ENCODE measurements at regions of chr5 and their contacts with region 1.

Region 1: GRCh38 chr5:94469889-94470288 is 148.5 kb downstream of the KIAA0825 start:
- DNase-seq: peak; percentile 55
- H3K4me3 ChIP-seq: peak overlapping the region in 1 of 2 experiments; percentile 33; a peak in 2 of 4 replicates
- H3K27ac ChIP-seq: peak overlapping the region; percentile 25 to 97; a peak in 3 of 4 replicates
- H3K4me1 ChIP-seq: peaks cover 0 to 37% of the 10 kb centered on the region in 2 experiments; a peak in 2 of 4 replicates
- H3K27me3 ChIP-seq: no peaks in the 10 kb centered on the region
- CTCF ChIP-seq: no peak
- EP300 ChIP-seq: peak; percentile 97 to 100
- RAD21 ChIP-seq: peak; percentile 55

Region 2: DNA sequence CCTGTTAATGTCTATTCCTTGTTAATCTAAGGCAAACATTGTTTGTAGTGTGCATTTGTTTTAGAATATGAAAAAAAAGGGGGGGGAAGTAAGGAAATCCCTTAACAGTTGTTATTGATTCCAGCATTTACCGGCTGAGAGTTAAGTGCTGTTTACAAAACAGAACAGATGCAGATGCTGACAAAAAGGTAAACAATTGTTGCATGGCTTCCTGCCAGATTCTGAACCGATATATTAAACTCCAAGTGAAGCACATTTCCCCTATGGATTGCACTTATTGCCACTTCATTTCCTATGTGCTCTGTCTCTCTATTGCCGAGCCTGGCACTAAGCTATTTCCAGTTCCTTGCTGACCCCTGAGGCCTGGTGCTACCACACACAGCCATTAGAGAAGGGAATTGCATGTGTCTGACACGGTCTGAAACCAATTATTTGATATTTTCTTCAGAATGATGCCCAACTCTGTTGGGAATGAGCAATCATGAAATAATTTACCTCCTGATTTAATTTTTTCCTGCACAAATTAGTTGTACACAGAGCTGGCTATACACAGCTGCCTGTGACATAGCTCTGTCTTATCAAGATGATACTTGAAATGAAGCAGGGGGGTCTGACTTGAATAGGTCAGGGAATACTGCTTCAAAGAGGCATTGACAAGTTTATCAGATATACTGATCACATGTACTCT is 38.7 kb after region 1 on chr5:
- CTCF ChIA-PET with region 1: interaction called, 12 read pairs
- POLR2A ChIA-PET with region 1: interaction called, 6 read pairs
- DNase-seq: peak; percentile 77
- H3K4me3 ChIP-seq: no peak overlapping the region
- H3K27ac ChIP-seq: peak overlapping the region in 1 of 2 experiments; percentile 96; a peak in 2 of 4 replicates
- H3K4me1 ChIP-seq: peaks cover 3 to 25% of the 10 kb centered on the region in 2 experiments; a peak in 2 of 4 replicates
- H3K27me3 ChIP-seq: no peaks in the 10 kb centered on the region
- CTCF ChIP-seq: no peak
- EP300 ChIP-seq: peak; percentile 56 to 98; a peak in 3 of 4 replicates
- RAD21 ChIP-seq: peak; percentile 52

Measured in SK-N-SH (cell line).